Heart right ventricle (tissue), 16 donors: ENCODE measurements at regions of chr9 and their contacts with region 1.

Region 1: DNA sequence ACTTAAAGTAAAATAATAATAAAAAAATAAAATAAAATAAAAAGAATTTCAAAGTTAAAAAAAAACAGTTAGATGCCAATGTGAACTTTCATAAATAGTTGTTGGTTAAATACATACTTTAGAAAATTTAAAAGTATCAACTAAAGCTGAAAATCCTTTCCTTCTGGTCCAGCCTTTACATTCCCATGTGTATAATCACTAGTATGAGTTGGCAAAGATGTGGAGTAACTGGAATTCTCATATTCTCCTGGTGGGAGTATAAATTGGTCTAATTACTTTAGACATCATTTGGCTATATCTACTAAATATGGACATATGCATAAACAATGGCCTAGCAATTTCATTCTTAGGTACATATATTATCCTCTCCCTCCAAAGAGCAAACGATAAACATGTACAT is 619.9 kb downstream of the PTPRD start:
- DNase-seq: no peak
- ATAC-seq: no peak
- H3K4me3 ChIP-seq: no peak overlapping the region
- H3K27ac ChIP-seq: no peak overlapping the region
- H3K4me1 ChIP-seq: no peaks in the 10 kb centered on the region
- H3K27me3 ChIP-seq: no peaks in the 10 kb centered on the region
- CTCF ChIP-seq: no peak

Region 2: GRCh38 chr9:9592104-9592503 is 400.8 kb before region 1 on chr9:
- intact Hi-C with region 1: no loop called
- DNase-seq: no peak
- ATAC-seq: no peak
- H3K4me3 ChIP-seq: no peak overlapping the region
- H3K27ac ChIP-seq: no peak overlapping the region
- H3K4me1 ChIP-seq: no peaks in the 10 kb centered on the region
- H3K27me3 ChIP-seq: no peaks in the 10 kb centered on the region
- CTCF ChIP-seq: no peak

Region 3: GRCh38 chr9:10007356-10007755 is 14.4 kb after region 1 on chr9:
- intact Hi-C with region 1: loop called in 1 of 10 experiments (anchors 2 kb)
- DNase-seq: no peak
- ATAC-seq: no peak
- H3K4me3 ChIP-seq: no peak overlapping the region
- H3K27ac ChIP-seq: no peak overlapping the region
- H3K4me1 ChIP-seq: no peaks in the 10 kb centered on the region
- H3K27me3 ChIP-seq: no peaks in the 10 kb centered on the region
- CTCF ChIP-seq: no peak

Region 4: DNA sequence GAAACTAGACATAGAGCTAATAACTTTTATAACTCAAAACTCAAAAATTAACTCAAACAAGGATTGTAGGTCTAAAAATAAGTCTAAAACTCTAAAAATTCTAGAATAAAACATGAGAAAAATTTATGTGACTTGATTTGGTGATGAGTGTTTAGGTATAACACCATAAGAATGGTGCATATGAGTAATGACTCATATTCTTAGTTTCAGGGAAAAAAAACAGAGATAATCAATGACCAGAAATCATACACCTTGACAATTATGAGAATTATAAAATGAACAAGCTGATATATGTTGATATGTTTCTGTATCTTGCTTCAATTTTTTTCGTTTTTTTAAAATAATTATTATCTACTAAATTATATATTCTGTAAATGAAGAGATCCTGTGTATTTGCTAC is 78.6 kb after region 1 on chr9:
- intact Hi-C with region 1: no loop called
- DNase-seq: no peak
- ATAC-seq: no peak
- H3K4me3 ChIP-seq: no peak overlapping the region
- H3K27ac ChIP-seq: no peak overlapping the region
- H3K4me1 ChIP-seq: no peaks in the 10 kb centered on the region
- H3K27me3 ChIP-seq: no peaks in the 10 kb centered on the region
- CTCF ChIP-seq: no peak